Colonic mucosa (tissue), 4 donors: ENCODE measurements at regions of chr1 and their contacts with region 1.

Region 1: GRCh38 chr1:16078925-16079656 is 5.6 kb upstream of the FAM131C start:
- DNase-seq: peak; percentile 84
- H3K4me3 ChIP-seq: no peak overlapping the region
- H3K27ac ChIP-seq: no peak overlapping the region
- H3K4me1 ChIP-seq: peaks cover 7% of the 10 kb centered on the region
- H3K27me3 ChIP-seq: no peaks in the 10 kb centered on the region
- CTCF ChIP-seq: peak; percentile 79

Region 2: GRCh38 chr1:16026723-16027484 is 52.2 kb before region 1 on chr1:
- intact Hi-C with region 1: no loop called
- DNase-seq: no peak
- H3K4me3 ChIP-seq: no peak overlapping the region
- H3K27ac ChIP-seq: no peak overlapping the region
- H3K4me1 ChIP-seq: no peaks in the 10 kb centered on the region
- H3K27me3 ChIP-seq: no peaks in the 10 kb centered on the region
- CTCF ChIP-seq: no peak

Region 3: DNA sequence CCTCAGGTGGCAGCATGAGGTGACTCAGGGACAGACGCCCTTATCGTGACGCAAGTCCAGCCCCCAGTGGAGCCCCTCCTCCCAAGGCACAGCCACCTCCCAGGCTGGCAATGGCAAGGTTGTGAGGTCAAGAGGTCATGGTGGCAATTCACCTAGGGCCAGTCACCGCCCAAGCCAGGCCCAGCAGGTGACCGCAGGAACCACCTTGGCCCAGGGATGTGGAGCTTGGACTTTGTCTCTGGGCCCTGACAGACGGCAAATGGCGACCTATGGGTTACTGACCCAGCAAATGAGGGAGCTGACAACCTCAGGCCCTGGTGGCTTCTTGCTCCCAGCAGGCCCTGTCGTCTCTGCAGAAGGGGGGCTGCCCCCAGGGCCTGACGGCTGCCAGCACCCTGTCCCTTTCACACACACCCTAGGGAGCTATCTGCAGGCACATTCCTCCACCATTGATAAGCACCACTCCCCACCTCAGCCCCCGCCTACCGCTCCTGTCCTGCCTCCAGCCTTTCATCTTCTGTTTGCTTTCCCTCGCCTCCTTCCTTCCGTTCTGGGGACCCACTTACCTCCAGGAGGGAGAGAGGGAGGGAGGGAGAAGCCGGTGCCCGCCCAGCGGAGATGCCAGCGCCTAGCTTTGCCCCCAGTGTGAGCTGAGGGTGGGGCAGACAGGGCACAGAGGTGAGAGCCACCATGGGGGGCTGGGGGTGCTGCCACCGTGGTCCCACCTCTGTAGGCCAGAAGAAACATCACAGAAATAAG is 64.7 kb after region 1 on chr1:
- intact Hi-C with region 1: loop called (anchors 5 kb)
- DNase-seq: peak; percentile 80
- H3K4me3 ChIP-seq: no peak overlapping the region
- H3K27ac ChIP-seq: peak overlapping the region; percentile 71
- H3K4me1 ChIP-seq: peaks cover 15% of the 10 kb centered on the region
- H3K27me3 ChIP-seq: no peaks in the 10 kb centered on the region
- CTCF ChIP-seq: no peak

Region 4: DNA sequence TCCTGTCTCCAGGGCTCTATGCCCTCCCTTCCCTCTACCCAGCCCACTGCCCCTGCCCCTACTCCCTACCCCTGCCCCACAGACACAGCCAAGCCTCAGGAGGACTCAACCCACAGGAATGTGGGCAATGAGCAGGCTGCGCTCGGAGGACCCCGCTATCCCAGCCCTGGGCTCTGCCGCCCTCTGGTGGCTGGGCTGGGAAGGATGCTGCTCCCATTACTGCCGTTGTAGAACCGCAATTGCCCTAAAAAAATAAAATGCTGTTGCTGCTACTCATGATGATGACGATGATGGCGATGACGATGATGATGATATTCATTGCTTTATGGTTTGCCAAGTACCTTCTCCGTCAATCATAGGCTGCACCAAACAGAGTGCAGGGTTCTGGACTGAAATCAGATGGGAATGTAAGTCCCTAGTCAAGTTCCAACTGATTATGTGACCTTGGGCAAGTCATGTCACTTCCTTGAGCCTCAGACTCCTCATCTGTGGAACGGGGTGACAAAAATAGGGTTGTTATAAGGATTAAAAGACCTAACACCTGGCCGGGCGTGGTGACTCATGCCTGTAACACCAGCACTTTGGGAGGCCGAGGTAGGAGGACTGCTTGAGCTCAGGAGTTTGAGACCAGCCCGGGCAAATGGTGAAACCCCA is 108.8 kb after region 1 on chr1:
- intact Hi-C with region 1: loop called (anchors 1 kb)
- DNase-seq: peak; percentile 85
- H3K4me3 ChIP-seq: no peak overlapping the region
- H3K27ac ChIP-seq: no peak overlapping the region
- H3K4me1 ChIP-seq: no peaks in the 10 kb centered on the region
- H3K27me3 ChIP-seq: no peaks in the 10 kb centered on the region
- CTCF ChIP-seq: peak; percentile 97

Region 5: GRCh38 chr1:16243936-16244649 is 165.0 kb after region 1 on chr1:
- intact Hi-C with region 1: loop called (anchors 2 kb)
- DNase-seq: peak; percentile 90
- H3K4me3 ChIP-seq: no peak overlapping the region
- H3K27ac ChIP-seq: no peak overlapping the region
- H3K4me1 ChIP-seq: peaks cover 14% of the 10 kb centered on the region
- H3K27me3 ChIP-seq: no peaks in the 10 kb centered on the region
- CTCF ChIP-seq: peak; percentile 93

Region 6: DNA sequence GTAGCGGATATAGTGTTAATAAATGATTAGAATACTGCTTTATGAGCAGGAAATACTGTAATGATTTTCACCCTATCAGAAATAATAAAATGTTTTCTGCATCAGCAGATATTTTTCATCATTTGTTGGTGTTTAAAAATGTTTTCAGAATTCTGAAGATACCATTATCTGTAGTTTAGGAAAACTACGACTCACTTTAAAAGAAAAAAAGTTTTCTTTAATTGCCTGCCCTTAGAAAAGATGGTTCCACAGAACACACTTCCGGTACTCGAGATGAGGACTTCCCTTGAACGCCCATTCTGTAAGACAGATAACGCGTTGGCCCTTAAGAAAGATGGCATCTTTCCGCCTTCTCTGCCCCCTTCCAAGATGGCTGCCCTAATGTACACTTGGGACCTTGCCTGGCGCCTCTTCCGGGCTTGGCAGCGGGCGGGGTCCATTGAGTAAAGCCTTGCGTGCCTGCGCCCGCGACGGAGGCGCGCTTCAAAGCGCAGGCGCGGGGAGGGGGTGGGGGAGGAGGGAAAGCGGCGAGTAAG is 287.7 kb after region 1 on chr1 and contains the start of gene SZRD1:
- intact Hi-C with region 1: loop called (anchors 5 kb)
- DNase-seq: peak; percentile 98
- H3K4me3 ChIP-seq: peak within 1 kb of the TSS; percentile 70
- H3K27ac ChIP-seq: peak within 1 kb of the TSS; percentile 91
- H3K4me1 ChIP-seq: peaks cover 8% of the 10 kb centered on the region
- H3K27me3 ChIP-seq: no peaks in the 10 kb centered on the region
- CTCF ChIP-seq: no peak
- total RNA-seq, gene SZRD1: 119 to 140 TPM